Posterior vena cava (tissue), 2 donors: ENCODE measurements at regions of chr6 and their contacts with region 1.

Region 1: GRCh38 chr6:125779924-125780539 is 10.7 kb upstream of the NCOA7 start:
- DNase-seq: peak; percentile 95

Region 2: GRCh38 chr6:125307150-125307838 is 472.7 kb before region 1 on chr6:
- intact Hi-C with region 1: loop called in 1 of 2 experiments (anchors 5 kb)
- DNase-seq: no peak

Region 3: DNA sequence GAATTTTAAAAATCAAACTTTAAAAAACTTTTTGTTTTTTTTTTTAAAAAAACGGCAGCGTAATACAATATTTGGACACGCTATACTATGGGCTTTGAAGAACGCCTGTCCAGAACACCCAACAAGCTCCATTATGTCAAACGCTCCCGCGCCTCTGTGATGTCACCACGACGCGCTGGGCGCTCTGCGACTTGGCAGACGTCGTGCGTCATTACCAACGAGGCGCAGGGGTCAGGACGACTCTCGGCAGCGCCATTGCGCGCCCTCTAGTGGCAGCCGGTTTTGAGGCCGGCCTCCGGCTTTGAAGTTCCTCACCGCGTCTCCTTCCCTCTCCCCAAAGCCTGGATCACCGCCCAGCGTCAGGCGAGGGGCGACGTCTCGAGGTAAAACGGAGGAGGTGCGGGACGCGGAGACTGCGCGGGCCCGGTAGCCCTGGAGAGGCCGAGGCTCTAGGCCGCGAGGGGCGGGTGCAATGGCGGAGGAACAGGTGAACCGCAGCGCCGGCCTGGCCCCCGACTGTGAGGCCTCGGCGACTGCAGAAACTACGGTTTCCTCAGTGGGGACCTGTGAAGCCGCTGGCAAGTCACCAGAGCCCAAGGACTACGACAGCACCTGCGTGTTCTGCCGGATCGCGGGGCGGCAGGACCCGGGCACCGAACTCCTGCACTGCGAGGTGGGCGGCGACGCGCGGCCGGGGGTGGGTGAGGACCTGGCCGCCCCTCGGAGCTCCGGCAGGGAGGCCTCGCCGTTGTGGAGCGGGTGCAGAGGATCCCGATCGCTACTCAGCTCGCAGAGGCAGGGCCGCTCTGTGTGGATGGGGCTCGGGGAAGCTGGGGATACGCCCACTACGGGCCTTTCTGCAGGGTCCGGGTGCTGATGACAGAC is 176.7 kb after region 1 on chr6 and contains the start of gene HINT3:
- intact Hi-C with region 1: loop called in 1 of 2 experiments (anchors 5 kb)
- DNase-seq: peak; percentile 100
- total RNA-seq, gene HINT3: 22.5 to 28.4 TPM